CD4-positive, alpha-beta T cell (primary cell): ENCODE measurements at regions of chr1 and their contacts with region 1.

Region 1: DNA sequence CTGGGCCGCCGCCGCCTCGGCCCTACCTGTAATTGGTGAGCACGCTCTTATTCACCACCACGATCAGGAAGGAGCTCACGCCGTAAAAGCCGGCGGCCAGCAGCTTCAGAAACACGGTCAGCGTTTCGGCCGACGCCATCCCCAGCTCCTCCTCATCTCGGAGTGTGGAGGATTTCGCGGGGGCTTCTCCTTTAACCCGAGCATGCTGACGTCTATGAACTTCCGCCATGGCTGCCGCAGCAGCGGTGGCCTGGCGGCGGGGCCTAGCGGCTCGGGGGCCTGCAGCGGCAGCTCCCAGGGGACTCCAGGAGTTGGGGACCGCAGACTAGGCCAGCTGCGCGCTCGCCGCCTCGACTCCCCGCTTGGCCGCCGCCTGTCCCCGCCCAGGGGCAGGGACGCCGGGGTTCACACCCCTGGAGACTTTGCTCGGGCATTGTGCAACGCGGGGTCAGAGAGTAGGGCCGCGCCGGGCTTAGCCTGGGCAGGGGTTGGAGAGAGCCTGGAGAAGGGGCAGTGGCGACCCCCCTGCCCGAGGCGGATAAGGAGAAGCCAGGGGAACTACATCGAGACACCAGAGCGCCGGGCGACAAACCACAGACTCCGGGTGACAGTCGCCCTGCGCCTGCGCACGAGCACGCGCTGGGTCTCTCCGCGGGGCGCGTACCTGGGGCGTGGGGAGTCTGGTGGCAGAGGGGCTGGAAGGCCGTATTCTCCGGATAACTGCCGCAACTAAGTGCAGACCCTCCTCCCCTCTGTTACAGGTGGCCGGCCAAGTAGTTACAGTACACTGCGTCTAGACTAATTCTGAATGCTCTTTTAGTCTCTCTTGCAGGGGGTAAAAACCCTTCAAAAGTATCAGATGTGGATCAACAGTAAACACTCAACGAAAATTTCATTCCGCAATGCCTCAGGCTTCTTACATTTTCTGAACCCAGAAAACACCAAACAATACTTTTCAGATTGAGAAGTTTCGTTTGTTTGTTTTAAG is at the start of gene SLC35D1:
- DNase-seq: peak; percentile 61 to 91 (median 74)
- ATAC-seq: peak; percentile 83
- H3K4me3 ChIP-seq: peak within 1 kb of the TSS; percentile 90
- H3K4me3 Mint-ChIP-seq: peak within 1 kb of the TSS; percentile 95
- H3K27ac ChIP-seq: peak within 1 kb of the TSS; percentile 87 to 97
- H3K27ac Mint-ChIP-seq: peak within 1 kb of the TSS; percentile 78
- H3K4me1 ChIP-seq: peaks cover 11% of the 10 kb centered on the region
- H3K4me1 Mint-ChIP-seq: peaks cover 39% of the 10 kb centered on the region
- H3K27me3 ChIP-seq: no peaks in the 10 kb centered on the region
- H3K27me3 Mint-ChIP-seq: no peaks in the 10 kb centered on the region
- CTCF ChIP-seq: no peak
- total RNA-seq, gene SLC35D1: 8.1 to 9.1 TPM

Region 2: GRCh38 chr1:66924756-66925557 is 129.1 kb before region 1 on chr1 and contains the starts of genes DNAI4 and MIER1:
- CTCF ChIA-PET with region 1: no interaction called
- POLR2A ChIA-PET with region 1: interaction called, 11 read pairs
- intact Hi-C with region 1: loop called (anchors 5 to 10 kb)
- DNase-seq: peak; percentile 90 to 99 (median 95)
- ATAC-seq: peak; percentile 89
- H3K4me3 ChIP-seq: peak within 1 kb of the TSS; percentile 92
- H3K4me3 Mint-ChIP-seq: peak within 1 kb of the TSS; percentile 97
- H3K27ac ChIP-seq: peak within 1 kb of the TSS; percentile 95 to 99
- H3K27ac Mint-ChIP-seq: peak within 1 kb of the TSS; percentile 98
- H3K4me1 ChIP-seq: peaks cover 24% of the 10 kb centered on the region
- H3K4me1 Mint-ChIP-seq: peaks cover 67% of the 10 kb centered on the region
- H3K27me3 ChIP-seq: no peaks in the 10 kb centered on the region
- H3K27me3 Mint-ChIP-seq: no peaks in the 10 kb centered on the region
- CTCF ChIP-seq: no peak
- total RNA-seq, gene DNAI4: 5.0 to 8.8 TPM
- total RNA-seq, gene MIER1: 106 to 107 TPM

Region 3: DNA sequence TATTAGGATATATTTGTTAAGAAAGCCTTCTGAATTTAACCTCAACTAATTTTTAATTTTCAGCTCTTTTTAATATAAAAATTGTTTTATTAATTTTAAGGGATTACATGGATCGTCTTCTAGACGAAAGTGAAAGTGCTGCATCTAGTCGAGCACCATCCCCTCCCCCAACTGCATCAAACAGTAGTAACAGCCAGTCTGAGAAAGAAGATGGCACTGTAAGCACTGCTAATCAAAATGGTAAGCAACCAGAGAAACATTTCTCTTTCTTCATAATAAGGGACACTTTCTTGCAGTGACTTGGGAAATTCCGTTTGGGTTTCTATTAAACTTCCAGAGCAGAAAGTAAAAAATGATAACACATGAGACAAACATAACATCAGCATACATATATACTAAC is 72.4 kb before region 1 on chr1:
- CTCF ChIA-PET with region 1: no interaction called
- POLR2A ChIA-PET with region 1: interaction called, 6 read pairs
- intact Hi-C with region 1: loop called in 1 of 2 experiments (anchors 5 kb)
- DNase-seq: peak; percentile 18 to 87 (median 42)
- ATAC-seq: peak; percentile 93
- H3K4me3 ChIP-seq: peak overlapping the region; percentile 52
- H3K4me3 Mint-ChIP-seq: peak overlapping the region; percentile 66
- H3K27ac ChIP-seq: peak overlapping the region; percentile 5 to 78
- H3K27ac Mint-ChIP-seq: peak overlapping the region; percentile 89
- H3K4me1 ChIP-seq: no peaks in the 10 kb centered on the region
- H3K4me1 Mint-ChIP-seq: peaks cover 40% of the 10 kb centered on the region
- H3K27me3 ChIP-seq: no peaks in the 10 kb centered on the region
- H3K27me3 Mint-ChIP-seq: no peaks in the 10 kb centered on the region
- CTCF ChIP-seq: no peak

Region 4: GRCh38 chr1:67134695-67135094 is 80.6 kb after region 1 on chr1 and contains the start of gene C1orf141:
- CTCF ChIA-PET with region 1: no interaction called
- POLR2A ChIA-PET with region 1: no interaction called
- intact Hi-C with region 1: loop called in 1 of 2 experiments (anchors 5 kb)
- DNase-seq: peak in 5 of 14 experiments; percentile 4 to 59 (median 36)
- ATAC-seq: peak; percentile 61
- H3K4me3 ChIP-seq: peak within 1 kb of the TSS; percentile 38
- H3K4me3 Mint-ChIP-seq: peak within 1 kb of the TSS; percentile 79
- H3K27ac ChIP-seq: no peak within 1 kb of the TSS
- H3K27ac Mint-ChIP-seq: no peak within 1 kb of the TSS
- H3K4me1 ChIP-seq: peaks cover 6% of the 10 kb centered on the region
- H3K4me1 Mint-ChIP-seq: peaks cover 12% of the 10 kb centered on the region
- H3K27me3 ChIP-seq: peaks cover 0 to 3% of the 10 kb centered on the region in 2 experiments
- H3K27me3 Mint-ChIP-seq: peaks cover 6% of the 10 kb centered on the region
- CTCF ChIP-seq: no peak
- total RNA-seq, gene C1orf141: not detected

Region 5: DNA sequence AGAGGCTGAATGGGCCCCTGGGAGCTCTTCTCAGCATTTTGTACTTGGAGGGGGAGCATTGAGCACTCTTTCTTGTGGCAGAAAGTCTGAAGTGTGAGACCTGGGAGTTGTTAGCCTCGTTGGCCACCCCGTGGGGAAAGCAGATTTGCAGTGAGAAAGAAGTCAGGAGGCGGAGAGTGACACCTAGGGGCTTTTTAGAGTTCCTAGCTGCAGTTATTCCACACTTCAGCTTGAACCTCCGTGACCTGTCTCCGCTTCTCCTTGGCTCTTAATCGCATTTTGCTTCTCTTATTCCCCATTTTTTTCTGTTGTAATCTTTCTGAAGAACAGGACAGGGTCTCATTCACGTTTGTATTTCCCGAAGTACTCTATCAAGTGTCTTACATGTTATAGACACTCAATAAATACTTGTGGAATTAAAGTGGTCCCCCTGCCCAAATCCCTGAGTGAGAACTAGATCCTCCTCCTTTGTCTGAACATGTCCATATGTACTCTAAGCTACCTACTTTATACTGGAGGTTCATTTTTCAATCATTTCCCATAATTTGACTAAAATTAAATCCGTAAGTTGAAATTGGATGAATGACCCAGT is 95.2 kb after region 1 on chr1:
- CTCF ChIA-PET with region 1: no interaction called
- POLR2A ChIA-PET with region 1: interaction called, 18 read pairs
- intact Hi-C with region 1: loop called in 1 of 2 experiments (anchors 5 kb)
- DNase-seq: peak; percentile 32 to 83 (median 56)
- ATAC-seq: peak; percentile 93
- H3K4me3 ChIP-seq: no peak overlapping the region
- H3K4me3 Mint-ChIP-seq: no peak overlapping the region
- H3K27ac ChIP-seq: no peak overlapping the region
- H3K27ac Mint-ChIP-seq: no peak overlapping the region
- H3K4me1 ChIP-seq: peaks cover 9% of the 10 kb centered on the region
- H3K4me1 Mint-ChIP-seq: peaks cover 31% of the 10 kb centered on the region
- H3K27me3 ChIP-seq: no peaks in the 10 kb centered on the region
- H3K27me3 Mint-ChIP-seq: no peaks in the 10 kb centered on the region
- CTCF ChIP-seq: peak; percentile 85

Region 6: GRCh38 chr1:67430352-67431155 is 376.5 kb after region 1 on chr1 and contains the start of gene SERBP1:
- CTCF ChIA-PET with region 1: no interaction called
- POLR2A ChIA-PET with region 1: interaction called, 13 read pairs
- intact Hi-C with region 1: loop called (anchors 2 to 5 kb)
- DNase-seq: peak; percentile 89 to 99 (median 94)
- ATAC-seq: peak; percentile 86
- H3K4me3 ChIP-seq: peak within 1 kb of the TSS; percentile 97
- H3K4me3 Mint-ChIP-seq: peak within 1 kb of the TSS; percentile 97
- H3K27ac ChIP-seq: peak within 1 kb of the TSS; percentile 97 to 98
- H3K27ac Mint-ChIP-seq: peak within 1 kb of the TSS; percentile 94
- H3K4me1 ChIP-seq: peaks cover 11% of the 10 kb centered on the region
- H3K4me1 Mint-ChIP-seq: peaks cover 59% of the 10 kb centered on the region
- H3K27me3 ChIP-seq: no peaks in the 10 kb centered on the region
- H3K27me3 Mint-ChIP-seq: no peaks in the 10 kb centered on the region
- CTCF ChIP-seq: no peak
- total RNA-seq, gene SERBP1: 128 to 135 TPM